Activated T-helper 1 cell treated with anti-CD3 and anti-CD28 coated beads, Interleukin-12 subunit alpha, Interleukin-12 subunit beta, Interleukin-2, Interleukin-4 antibody, amounts not matched to agents 30 ng/mL and 10 ng/mL and 1 ng/mL, durations not matched to agents 14 hours and 24 hours and 36 hours (primary cell): ENCODE measurements at regions of chr6 and their contacts with region 1.

Region 1: GRCh38 chr6:42367353-42368011 is 84.2 kb downstream of the TRERF1 start:
- DNase-seq: peak; percentile 42
- H3K4me3 Mint-ChIP-seq: peak overlapping the region; percentile 70
- H3K27ac Mint-ChIP-seq: peak overlapping the region; percentile 85
- H3K4me1 Mint-ChIP-seq: peaks cover 81% of the 10 kb centered on the region
- H3K27me3 Mint-ChIP-seq: no peaks in the 10 kb centered on the region

Region 2: DNA sequence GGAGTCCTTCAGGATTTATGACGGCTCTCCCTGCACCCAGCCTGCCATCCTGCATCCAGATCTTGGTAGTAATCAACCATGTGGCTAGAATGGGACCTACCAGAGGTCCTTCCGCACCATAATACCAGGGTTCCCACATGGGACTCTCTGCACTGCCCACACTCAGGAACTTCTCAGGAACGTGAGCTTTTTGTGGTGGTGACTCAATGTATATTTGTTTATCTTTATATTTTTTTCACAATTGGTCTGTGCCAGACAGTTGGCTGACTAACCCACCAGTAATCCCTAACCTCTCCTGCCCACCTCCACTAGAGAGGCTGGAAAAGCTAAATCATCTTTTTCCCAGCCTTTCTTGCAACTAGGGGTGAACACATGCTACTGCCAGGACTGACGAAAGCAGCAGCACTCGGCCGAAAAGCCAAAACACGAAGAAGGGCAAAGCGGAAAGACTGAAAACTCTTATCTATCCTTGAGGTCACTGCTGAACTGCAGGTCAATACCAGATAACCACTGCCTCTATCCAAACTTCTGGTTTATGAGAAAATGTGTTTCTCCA is 28.7 kb before region 1 on chr6:
- intact Hi-C with region 1: loop called (anchors 1 kb)
- DNase-seq: no peak
- H3K4me3 Mint-ChIP-seq: peak overlapping the region; percentile 49
- H3K27ac Mint-ChIP-seq: peak overlapping the region; percentile 89
- H3K4me1 Mint-ChIP-seq: peaks cover 84% of the 10 kb centered on the region
- H3K27me3 Mint-ChIP-seq: no peaks in the 10 kb centered on the region

Region 3: GRCh38 chr6:42378125-42378524 is 10.6 kb after region 1 on chr6:
- intact Hi-C with region 1: loop called (anchors 1 kb)
- DNase-seq: peak; percentile 38
- H3K4me3 Mint-ChIP-seq: peak overlapping the region; percentile 60
- H3K27ac Mint-ChIP-seq: peak overlapping the region; percentile 71
- H3K4me1 Mint-ChIP-seq: peaks cover 64% of the 10 kb centered on the region
- H3K27me3 Mint-ChIP-seq: no peaks in the 10 kb centered on the region

Region 4: DNA sequence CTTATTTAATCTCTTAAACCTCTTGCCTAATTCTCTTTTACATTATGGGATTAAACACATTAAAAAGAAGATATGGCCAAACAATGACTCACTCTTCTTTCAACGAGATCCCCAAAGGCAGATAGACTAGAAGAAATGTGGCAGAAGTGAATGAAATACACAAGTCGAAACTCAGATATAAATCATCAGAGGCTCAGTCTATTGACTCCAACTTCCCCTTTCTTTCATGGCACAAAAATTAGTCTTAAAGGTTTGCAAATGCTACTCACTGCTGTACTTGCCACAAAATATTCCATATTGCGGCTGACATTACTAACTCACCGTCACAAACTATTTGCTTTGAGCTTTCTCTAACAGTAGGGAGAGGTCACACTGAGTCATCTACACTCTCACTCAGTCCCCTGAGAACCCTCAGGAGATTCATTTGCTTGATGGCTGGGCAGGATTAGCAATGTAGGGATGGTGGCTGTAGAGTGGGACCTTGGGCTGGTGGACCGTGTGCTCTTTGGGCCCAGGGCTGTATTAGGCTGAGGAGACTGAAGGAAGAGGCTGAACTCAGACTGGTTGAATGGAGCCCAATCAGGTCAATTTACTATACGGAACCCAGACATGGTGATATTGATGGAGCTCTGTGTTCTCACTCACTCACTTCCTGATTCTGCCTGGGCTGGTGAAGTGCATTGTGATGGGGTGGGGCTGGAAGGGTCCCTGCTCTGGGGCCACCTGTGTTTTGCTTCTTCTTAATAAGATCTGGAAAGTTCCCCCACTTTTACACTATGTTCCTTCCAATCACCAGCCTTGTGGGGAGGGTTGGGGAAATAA is 153.5 kb after region 1 on chr6:
- intact Hi-C with region 1: loop called (anchors 1 kb)
- DNase-seq: no peak
- H3K4me3 Mint-ChIP-seq: peak overlapping the region; percentile 9
- H3K27ac Mint-ChIP-seq: peak overlapping the region; percentile 89
- H3K4me1 Mint-ChIP-seq: peaks cover 16% of the 10 kb centered on the region
- H3K27me3 Mint-ChIP-seq: peaks cover 4% of the 10 kb centered on the region